PC-3 (cell line): ENCODE measurements at regions of chr1 and their contacts with region 1.

Region 1: GRCh38 chr1:28409090-28409489 is 39.5 kb downstream of the PHACTR4 start:
- DNase-seq: no peak
- ATAC-seq: no peak
- H3K4me3 ChIP-seq: no peak overlapping the region
- H3K27ac ChIP-seq: no peak overlapping the region
- H3K4me1 ChIP-seq: no peaks in the 10 kb centered on the region
- H3K27me3 ChIP-seq: no peaks in the 10 kb centered on the region
- CTCF ChIP-seq: no peak

Region 2: GRCh38 chr1:28036431-28036830 is 372.7 kb before region 1 on chr1:
- CTCF ChIA-PET with region 1: no interaction called
- POLR2A ChIA-PET with region 1: no interaction called
- intact Hi-C with region 1: no loop called
- DNase-seq: peak; percentile 29
- ATAC-seq: peak; percentile 63; the same call in 1 of the 2 replicates
- H3K4me3 ChIP-seq: no peak overlapping the region
- H3K27ac ChIP-seq: no peak overlapping the region
- H3K4me1 ChIP-seq: peaks cover under 1% of the 10 kb centered on the region; the same call in 1 of the 2 replicates
- H3K27me3 ChIP-seq: no peaks in the 10 kb centered on the region
- CTCF ChIP-seq: peak; percentile 48

Region 3: DNA sequence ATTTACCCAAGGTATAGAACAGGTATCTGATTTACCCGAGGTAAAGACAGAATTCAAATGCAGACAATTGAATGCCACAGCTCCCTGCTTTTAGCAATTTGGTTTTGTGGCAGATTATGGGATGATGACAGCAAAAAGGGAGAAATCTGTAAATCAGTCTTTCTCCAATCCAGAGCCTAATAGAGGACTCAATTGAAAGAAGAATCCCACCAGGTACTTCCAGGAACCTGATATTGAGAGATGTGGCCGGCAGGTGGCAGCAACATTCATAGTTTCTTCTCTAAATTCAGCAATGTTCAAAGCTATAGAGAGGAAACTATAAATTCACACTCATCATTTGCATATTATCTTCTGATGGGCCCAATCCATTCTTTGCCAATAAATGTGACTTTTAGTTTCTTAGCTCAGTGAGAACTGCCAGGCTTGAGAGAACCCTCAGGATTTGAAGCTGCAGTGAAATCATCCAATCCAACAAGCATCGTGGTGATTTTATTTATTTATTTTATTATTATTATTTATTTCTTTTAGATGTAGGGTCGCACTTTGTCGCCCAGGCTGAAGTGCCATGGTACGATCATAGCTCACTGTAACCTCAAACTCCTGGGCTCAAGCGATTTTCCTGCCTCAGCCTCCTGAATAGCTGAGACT is 49.4 kb before region 1 on chr1:
- CTCF ChIA-PET with region 1: no interaction called
- POLR2A ChIA-PET with region 1: no interaction called
- intact Hi-C with region 1: loop called (anchors 5 kb)
- DNase-seq: peak; percentile 78
- ATAC-seq: peak; percentile 78
- H3K4me3 ChIP-seq: no peak overlapping the region
- H3K27ac ChIP-seq: no peak overlapping the region
- H3K4me1 ChIP-seq: peaks cover 7% of the 10 kb centered on the region
- H3K27me3 ChIP-seq: no peaks in the 10 kb centered on the region
- CTCF ChIP-seq: peak; percentile 81

Region 4: DNA sequence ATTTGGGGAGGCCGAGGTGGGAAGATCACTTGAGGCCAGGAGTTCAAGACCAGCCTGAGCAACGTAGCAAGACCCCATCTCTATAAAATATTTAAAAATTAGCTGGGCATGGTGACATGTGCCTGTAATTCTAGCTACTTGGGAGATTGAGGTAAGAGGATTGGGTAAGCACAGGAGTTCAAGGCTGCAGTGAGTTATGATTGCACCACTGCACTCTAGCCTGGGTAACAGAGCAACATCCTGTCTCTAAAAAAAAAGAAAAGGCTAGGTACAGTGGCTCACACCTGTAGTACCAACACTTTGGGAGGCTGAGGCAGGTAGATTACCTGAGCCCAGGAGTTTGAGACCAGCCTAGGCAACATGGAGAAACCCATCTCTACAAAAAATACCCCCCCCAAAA is 61.1 kb after region 1 on chr1:
- CTCF ChIA-PET with region 1: no interaction called
- POLR2A ChIA-PET with region 1: no interaction called
- intact Hi-C with region 1: loop called (anchors 1 kb)
- DNase-seq: no peak
- ATAC-seq: no peak
- H3K4me3 ChIP-seq: no peak overlapping the region
- H3K27ac ChIP-seq: no peak overlapping the region
- H3K4me1 ChIP-seq: 0 out of 2 replicates have a peak, but pooled peaks cover 6% of the 10 kb centered on the region
- H3K27me3 ChIP-seq: no peaks in the 10 kb centered on the region
- CTCF ChIP-seq: no peak

Region 5: DNA sequence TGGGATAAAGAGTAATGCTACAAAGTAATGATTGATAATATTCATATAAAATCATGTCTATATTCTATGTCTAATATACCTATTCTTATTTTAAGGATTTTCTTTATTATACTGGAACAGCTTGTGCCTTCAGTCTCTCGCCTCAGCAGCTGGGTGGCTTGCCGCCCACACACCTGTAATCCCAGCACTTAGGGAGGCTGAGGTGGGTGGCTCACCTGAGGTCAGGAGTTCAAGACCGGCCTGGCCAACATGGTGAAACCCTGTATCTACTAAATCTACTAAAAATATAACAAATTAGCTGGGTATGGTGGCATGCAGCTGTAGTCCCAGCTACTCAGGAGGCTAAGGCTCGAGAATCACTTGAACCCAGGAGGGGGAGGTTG is 136.1 kb after region 1 on chr1:
- CTCF ChIA-PET with region 1: no interaction called
- POLR2A ChIA-PET with region 1: no interaction called
- intact Hi-C with region 1: no loop called
- DNase-seq: no peak
- ATAC-seq: no peak
- H3K4me3 ChIP-seq: no peak overlapping the region
- H3K27ac ChIP-seq: no peak overlapping the region
- H3K4me1 ChIP-seq: no peaks in the 10 kb centered on the region
- H3K27me3 ChIP-seq: no peaks in the 10 kb centered on the region
- CTCF ChIP-seq: no peak